A673 (cell line): ENCODE measurements at regions of chr19 and their contacts with region 1.

Region 1: GRCh38 chr19:40662921-40663694 is 27.3 kb downstream of the NUMBL start:
- DNase-seq: peak; percentile 90
- H3K4me3 ChIP-seq: peak overlapping the region; percentile 71
- H3K27ac ChIP-seq: peak overlapping the region; percentile 80
- H3K4me1 ChIP-seq: peaks cover 3% of the 10 kb centered on the region
- H3K27me3 ChIP-seq: no peaks in the 10 kb centered on the region
- CTCF ChIP-seq: peak; percentile 92; the same call in 1 of the 2 replicates

Region 2: DNA sequence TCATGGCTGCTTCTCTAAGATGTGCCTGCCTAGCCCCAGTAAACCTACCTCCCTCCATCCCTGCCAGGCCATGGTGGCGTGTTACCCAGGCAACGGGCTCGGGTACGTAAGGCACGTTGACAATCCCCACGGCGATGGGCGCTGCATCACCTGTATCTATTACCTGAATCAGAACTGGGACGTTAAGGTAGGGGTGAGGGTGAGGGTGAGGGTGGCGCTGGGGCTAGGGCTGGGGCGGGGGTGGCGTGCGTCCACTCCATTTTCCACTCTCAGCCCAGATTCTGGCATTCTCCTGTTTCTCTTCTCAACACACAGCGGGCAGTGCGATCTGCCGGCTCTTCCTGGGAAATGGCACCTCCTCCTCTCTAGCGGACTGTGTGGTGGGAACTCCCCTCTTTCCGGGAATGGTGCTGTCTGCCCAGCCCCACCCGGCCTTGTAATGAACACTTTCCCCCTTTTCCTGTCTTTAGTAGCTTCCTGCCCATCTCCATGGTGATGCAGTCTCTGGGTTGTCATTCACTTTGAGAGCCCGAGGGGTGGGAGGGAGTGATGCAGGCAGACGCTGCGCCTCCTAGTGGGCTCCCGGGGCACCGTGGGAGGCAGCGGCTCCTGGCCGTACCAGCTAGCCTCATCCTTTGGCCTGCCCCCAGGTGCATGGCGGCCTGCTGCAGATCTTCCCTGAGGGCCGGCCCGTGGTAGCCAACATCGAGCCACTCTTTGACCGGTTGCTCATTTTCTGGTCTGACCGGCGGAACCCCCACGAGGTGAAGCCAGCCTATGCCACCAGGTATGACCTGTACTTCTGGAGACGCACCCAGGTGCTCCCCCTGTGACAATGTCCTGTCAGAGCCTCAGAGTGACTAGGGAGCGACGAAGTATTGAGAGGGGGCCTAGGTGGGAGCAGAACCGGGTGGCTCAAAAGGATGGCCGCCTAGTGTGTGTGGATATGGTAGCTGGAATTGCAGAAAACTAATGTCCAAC is 143.7 kb after region 1 on chr19:
- CTCF ChIA-PET with region 1: interaction called, 18 read pairs
- POLR2A ChIA-PET with region 1: no interaction called
- intact Hi-C with region 1: no loop called
- DNase-seq: peak; percentile 99
- H3K4me3 ChIP-seq: peak overlapping the region; percentile 20
- H3K27ac ChIP-seq: peak overlapping the region; percentile 47
- H3K4me1 ChIP-seq: peaks cover 53% of the 10 kb centered on the region
- H3K27me3 ChIP-seq: no peaks in the 10 kb centered on the region
- CTCF ChIP-seq: peak; percentile 100

Region 3: DNA sequence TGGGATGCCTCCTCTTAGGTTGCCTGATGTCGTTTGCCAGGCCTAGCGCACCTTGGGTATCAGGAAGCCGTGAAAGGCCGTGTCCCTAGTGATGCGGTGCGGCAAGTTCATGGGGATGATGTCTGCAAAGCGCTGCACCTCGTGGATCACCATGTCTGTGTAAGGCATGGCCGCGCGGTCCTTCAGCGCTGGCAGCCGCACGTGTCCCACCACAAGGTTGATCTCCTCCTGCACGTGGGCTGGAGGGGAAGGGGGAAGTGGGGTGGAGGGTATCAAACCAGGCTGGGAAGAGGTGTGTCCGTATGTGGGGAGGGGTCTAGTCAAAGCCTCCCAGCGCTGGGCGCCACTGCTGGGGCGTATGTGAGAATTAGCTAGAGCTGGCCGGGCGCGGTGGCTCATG is 159.1 kb after region 1 on chr19:
- CTCF ChIA-PET with region 1: interaction called, 4 read pairs
- POLR2A ChIA-PET with region 1: no interaction called
- intact Hi-C with region 1: loop called (anchors 1 kb)
- DNase-seq: no peak
- H3K4me3 ChIP-seq: no peak overlapping the region
- H3K27ac ChIP-seq: no peak overlapping the region
- H3K4me1 ChIP-seq: no peaks in the 10 kb centered on the region
- H3K27me3 ChIP-seq: no peaks in the 10 kb centered on the region
- CTCF ChIP-seq: no peak

Region 4: DNA sequence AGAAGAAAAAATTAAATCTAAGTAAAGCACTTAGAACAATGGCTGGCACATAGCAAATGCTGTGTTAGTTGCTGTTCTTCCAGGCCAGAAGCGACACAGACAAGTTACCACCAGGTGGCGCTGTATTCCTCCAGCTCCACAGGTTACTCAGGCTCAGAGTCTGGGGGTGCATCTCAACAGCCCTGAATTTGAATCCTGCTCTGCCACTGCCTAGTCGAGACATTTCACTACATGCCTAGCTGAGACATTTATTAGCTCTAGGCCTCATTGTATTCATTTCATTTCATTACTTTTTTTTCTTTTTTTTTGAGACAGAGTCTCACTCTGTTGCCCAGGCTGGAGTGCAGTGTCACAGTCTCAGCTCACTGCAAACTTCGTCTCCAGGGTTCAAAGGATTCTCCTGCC is 311.5 kb after region 1 on chr19:
- CTCF ChIA-PET with region 1: no interaction called
- POLR2A ChIA-PET with region 1: no interaction called
- intact Hi-C with region 1: loop called (anchors 10 kb)
- DNase-seq: peak; percentile 82
- H3K4me3 ChIP-seq: no peak overlapping the region
- H3K27ac ChIP-seq: no peak overlapping the region
- H3K4me1 ChIP-seq: no peaks in the 10 kb centered on the region
- H3K27me3 ChIP-seq: no peaks in the 10 kb centered on the region
- CTCF ChIP-seq: peak; percentile 86

Region 5: GRCh38 chr19:41144403-41144802 is 481.3 kb after region 1 on chr19:
- CTCF ChIA-PET with region 1: interaction called, 14 read pairs
- POLR2A ChIA-PET with region 1: no interaction called
- intact Hi-C with region 1: loop called (anchors 2 kb)
- DNase-seq: peak; percentile 83
- H3K4me3 ChIP-seq: no peak overlapping the region
- H3K27ac ChIP-seq: no peak overlapping the region
- H3K4me1 ChIP-seq: no peaks in the 10 kb centered on the region
- H3K27me3 ChIP-seq: peaks cover 8% of the 10 kb centered on the region
- CTCF ChIP-seq: peak; percentile 85